Sigmoid colon (tissue), 7 donors: ENCODE measurements at regions of chr1 and their contacts with region 1.

Region 1: DNA sequence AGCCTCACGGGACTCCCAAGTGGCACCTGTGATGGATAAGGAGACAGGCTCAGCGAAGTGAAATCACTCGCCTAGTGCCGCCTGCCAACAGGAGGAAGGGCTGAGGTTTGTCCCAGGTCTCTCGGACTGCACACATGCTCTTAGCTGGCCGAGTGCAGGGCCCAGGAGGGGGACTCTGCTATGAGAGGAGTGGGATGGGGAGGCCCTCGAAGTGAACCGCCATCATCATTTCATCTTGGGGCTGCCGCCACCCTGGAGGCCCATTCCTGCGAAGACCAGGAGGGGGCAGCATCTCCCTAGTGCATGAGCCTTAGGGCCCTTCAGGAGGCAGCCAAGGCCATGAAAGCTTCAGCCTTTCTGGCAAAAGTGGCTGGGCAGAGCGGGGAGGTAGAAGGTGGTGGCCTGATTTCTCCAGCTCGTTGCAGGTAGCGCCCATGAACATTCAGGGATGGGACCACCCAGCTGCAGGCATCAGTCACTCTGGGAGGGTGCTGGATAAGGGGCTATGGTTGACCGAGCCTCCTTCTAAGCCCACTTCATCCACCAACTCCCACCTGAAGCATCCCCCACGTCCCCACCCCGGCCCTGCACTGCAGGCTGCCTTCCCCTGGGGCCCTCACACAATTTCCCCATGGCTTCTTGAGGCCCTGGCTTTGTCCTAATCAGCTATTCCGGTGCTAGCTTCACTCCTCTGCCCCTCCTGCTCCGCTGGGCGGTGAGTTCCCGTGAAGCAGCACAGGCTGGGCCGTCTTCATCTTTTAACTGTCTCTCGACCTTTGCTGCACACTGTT is 17.2 kb upstream of the RASSF5 start:
- DNase-seq: peak; percentile 85
- H3K4me3 ChIP-seq: no peak overlapping the region
- H3K27ac ChIP-seq: no peak overlapping the region
- H3K4me1 ChIP-seq: peaks cover 0 to 6% (median 5%) of the 10 kb centered on the region in 4 donors
- H3K27me3 ChIP-seq: no peaks in the 10 kb centered on the region
- CTCF ChIP-seq: peak; percentile 58 to 93 (median 78)
- EP300 ChIP-seq: no peak
- POLR2A ChIP-seq: no peak

Region 2: GRCh38 chr1:206583707-206584648 is 93.8 kb after region 1 on chr1:
- intact Hi-C with region 1: loop called (anchors 5 kb)
- DNase-seq: peak; percentile 79
- H3K4me3 ChIP-seq: no peak overlapping the region
- H3K27ac ChIP-seq: no peak overlapping the region
- H3K4me1 ChIP-seq: peaks cover 0 to 20% (median 7%) of the 10 kb centered on the region in 4 donors
- H3K27me3 ChIP-seq: no peaks in the 10 kb centered on the region
- CTCF ChIP-seq: peak; percentile 59 to 87 (median 82)
- EP300 ChIP-seq: no peak
- POLR2A ChIP-seq: no peak

Region 3: GRCh38 chr1:206663832-206664652 is 173.9 kb after region 1 on chr1:
- intact Hi-C with region 1: loop called (anchors 5 kb)
- DNase-seq: peak; percentile 77
- H3K4me3 ChIP-seq: peak overlapping the region in 3 of 4 donors; percentile 19 to 34 (median 21)
- H3K27ac ChIP-seq: peak overlapping the region in 1 of 4 donors; percentile 26
- H3K4me1 ChIP-seq: peaks cover 0 to 15% (median 11%) of the 10 kb centered on the region in 4 donors
- H3K27me3 ChIP-seq: peaks cover 0 to 5% (median 0%) of the 10 kb centered on the region in 3 donors
- CTCF ChIP-seq: peak; percentile 83 to 91 (median 88)
- EP300 ChIP-seq: no peak
- POLR2A ChIP-seq: no peak

Region 4: DNA sequence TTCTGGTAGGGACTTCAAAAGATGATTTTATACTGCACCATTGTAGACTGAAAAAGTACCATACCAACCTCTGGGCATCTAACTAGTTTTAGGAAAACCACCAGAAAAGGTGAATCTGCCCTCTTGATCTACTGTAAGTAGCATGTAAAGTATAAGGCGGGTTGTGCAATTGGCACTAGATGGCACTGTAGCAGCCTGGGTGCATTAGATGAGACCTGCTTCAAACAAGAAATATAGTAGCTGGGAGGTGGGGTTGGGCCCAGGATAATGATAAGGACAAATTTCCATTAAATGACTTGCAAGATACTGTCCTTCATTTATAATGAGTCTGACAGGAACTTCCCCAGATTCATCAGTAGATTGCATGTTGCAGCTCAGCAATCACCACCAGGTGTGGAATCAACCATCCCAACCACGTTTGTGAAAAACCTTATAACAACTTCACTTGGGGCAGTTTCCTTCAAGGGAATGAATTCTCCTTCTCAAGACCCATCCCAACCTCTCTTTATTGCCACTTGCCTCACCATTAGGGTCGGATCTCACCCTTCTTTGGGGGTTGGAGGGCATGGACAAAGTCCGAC is 319.4 kb after region 1 on chr1:
- intact Hi-C with region 1: no loop called
- DNase-seq: no peak
- H3K4me3 ChIP-seq: no peak overlapping the region
- H3K27ac ChIP-seq: no peak overlapping the region
- H3K4me1 ChIP-seq: no peaks in the 10 kb centered on the region
- H3K27me3 ChIP-seq: no peaks in the 10 kb centered on the region
- CTCF ChIP-seq: peak in 1 of 4 experiments; percentile 10
- EP300 ChIP-seq: no peak
- POLR2A ChIP-seq: no peak

Region 5: GRCh38 chr1:206912445-206913095 is 422.4 kb after region 1 on chr1:
- intact Hi-C with region 1: loop called (anchors 10 kb)
- DNase-seq: peak; percentile 87
- H3K4me3 ChIP-seq: no peak overlapping the region
- H3K27ac ChIP-seq: no peak overlapping the region
- H3K4me1 ChIP-seq: peaks cover 0 to 21% (median 15%) of the 10 kb centered on the region in 4 donors
- H3K27me3 ChIP-seq: peaks cover 0 to 21% (median 14%) of the 10 kb centered on the region in 3 donors
- CTCF ChIP-seq: peak; percentile 54 to 86 (median 82)
- EP300 ChIP-seq: no peak
- POLR2A ChIP-seq: no peak